ENCODE measurements at regions of chr12 and their contacts with region 1.

Region 1: GRCh38 chr12:84904051-84904450 is 8.5 kb downstream of the SLC6A15 start:
- DNase-seq: no peak
- ATAC-seq: no peak
- H3K4me3 Mint-ChIP-seq: no peak overlapping the region
- H3K27ac Mint-ChIP-seq: no peak overlapping the region
- H3K4me1 Mint-ChIP-seq: no peaks in the 10 kb centered on the region
- H3K27me3 Mint-ChIP-seq: no peaks in the 10 kb centered on the region
- CTCF ChIP-seq: no peak

Region 2: GRCh38 chr12:84738481-84738972 is 165.5 kb before region 1 on chr12:
- CTCF ChIA-PET with region 1: no interaction called
- POLR2A ChIA-PET with region 1: no interaction called
- intact Hi-C with region 1: no loop called
- DNase-seq: no peak
- ATAC-seq: no peak
- H3K4me3 Mint-ChIP-seq: no peak overlapping the region
- H3K27ac Mint-ChIP-seq: no peak overlapping the region
- H3K4me1 Mint-ChIP-seq: no peaks in the 10 kb centered on the region
- H3K27me3 Mint-ChIP-seq: no peaks in the 10 kb centered on the region
- CTCF ChIP-seq: no peak

Region 3: DNA sequence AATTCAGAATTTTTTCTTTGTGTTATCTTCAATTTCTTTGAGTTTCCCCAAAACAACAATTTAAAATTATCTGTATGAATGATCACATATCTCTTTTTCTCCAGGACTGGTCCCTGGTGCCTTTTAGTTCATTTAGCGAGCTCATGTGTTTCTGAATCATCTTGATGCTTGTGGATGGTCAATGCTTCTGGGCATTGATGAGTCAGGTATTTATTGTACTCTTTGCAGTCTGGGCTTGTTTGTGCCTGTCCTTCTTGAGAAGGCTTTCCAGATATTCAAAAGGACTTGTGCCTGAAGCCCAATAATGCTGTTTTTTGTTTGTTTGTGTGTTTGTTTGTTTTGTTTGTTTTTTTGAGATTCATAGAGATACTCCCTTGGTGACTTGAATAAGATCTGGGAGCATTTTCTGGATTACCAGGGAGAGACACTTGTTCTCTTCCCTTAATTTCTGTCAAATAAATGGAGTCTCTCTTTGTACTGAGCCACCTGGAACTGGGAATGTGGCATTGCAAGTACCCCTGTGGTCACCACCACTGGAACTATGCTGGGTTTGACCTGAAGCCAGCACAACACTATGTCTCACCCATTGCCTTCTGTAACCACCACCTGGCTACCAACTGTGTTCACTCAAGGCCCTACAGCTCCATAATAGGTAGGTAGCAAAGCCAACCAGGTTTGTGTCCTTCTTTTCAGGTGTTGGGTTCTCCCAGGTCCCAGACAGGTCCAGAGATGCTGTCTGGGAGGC is 47.7 kb before region 1 on chr12:
- CTCF ChIA-PET with region 1: no interaction called
- POLR2A ChIA-PET with region 1: interaction called, 11 read pairs
- intact Hi-C with region 1: no loop called
- DNase-seq: no peak
- ATAC-seq: no peak
- H3K4me3 Mint-ChIP-seq: no peak overlapping the region
- H3K27ac Mint-ChIP-seq: no peak overlapping the region
- H3K4me1 Mint-ChIP-seq: no peaks in the 10 kb centered on the region
- H3K27me3 Mint-ChIP-seq: no peaks in the 10 kb centered on the region
- CTCF ChIP-seq: no peak

Region 4: DNA sequence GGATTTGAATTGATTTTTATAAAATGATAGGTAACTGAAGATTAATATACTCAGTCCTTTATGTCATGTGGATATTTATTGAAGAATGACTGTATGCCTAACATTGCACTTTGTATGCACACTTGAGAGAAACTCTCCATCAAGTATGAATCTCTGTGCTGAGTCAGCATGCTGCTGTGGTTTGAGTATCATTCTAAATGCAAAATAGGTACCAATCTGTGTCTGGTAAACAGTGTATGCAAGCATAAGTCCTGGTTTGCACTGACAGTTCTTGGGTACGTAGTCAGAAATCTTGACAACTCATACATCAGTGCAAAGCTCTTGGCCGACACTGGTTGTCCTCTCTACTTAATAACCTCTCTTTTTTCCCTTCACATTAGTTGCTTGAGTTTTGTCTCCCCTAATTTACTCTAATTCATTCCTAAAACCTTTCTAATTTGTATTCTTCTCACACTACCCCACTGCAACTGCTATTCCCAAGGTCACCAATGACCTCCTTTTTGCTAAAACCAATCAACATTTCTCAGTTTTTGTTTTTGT is 1330.3 kb after region 1 on chr12:
- CTCF ChIA-PET with region 1: no interaction called
- POLR2A ChIA-PET with region 1: no interaction called
- intact Hi-C with region 1: no loop called
- DNase-seq: no peak
- ATAC-seq: no peak
- H3K4me3 Mint-ChIP-seq: no peak overlapping the region
- H3K27ac Mint-ChIP-seq: no peak overlapping the region
- H3K4me1 Mint-ChIP-seq: no peaks in the 10 kb centered on the region
- H3K27me3 Mint-ChIP-seq: no peaks in the 10 kb centered on the region
- CTCF ChIP-seq: no peak